GM10248 (cell line): ENCODE measurements at regions of chr3 and their contacts with region 1.

Region 1: DNA sequence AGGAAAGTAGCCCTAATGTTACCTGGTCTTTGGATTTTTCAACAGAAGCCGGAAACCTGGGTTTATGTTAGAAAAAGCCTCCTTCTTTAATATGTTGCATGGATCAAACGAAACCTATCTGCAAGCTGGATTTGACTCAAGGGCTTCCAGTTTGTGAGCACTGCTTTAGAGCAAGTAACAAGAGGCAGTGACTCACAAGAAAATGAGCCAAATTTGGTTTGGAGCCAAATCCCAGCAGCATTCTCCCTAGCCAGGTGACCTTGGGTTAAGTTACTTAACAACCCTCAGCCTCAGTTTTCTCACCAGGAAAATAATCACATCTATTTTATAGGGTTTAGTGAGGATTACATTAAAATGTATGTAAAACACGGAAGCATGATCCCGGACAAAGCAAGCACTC is 215.2 kb upstream of the PRICKLE2 start:
- DNase-seq: no peak
- CTCF ChIP-seq: no peak

Region 2: GRCh38 chr3:64426551-64426950 is 13.9 kb before region 1 on chr3:
- CTCF ChIA-PET with region 1: interaction called, 11 read pairs
- POLR2A ChIA-PET with region 1: no interaction called
- DNase-seq: no peak
- CTCF ChIP-seq: no peak

Region 3: GRCh38 chr3:64454179-64454578 is 13.7 kb after region 1 on chr3:
- CTCF ChIA-PET with region 1: interaction called, 15 read pairs
- POLR2A ChIA-PET with region 1: no interaction called
- DNase-seq: no peak
- CTCF ChIP-seq: no peak

Region 4: GRCh38 chr3:64508140-64508539 is 67.6 kb after region 1 on chr3:
- CTCF ChIA-PET with region 1: no interaction called
- POLR2A ChIA-PET with region 1: no interaction called
- DNase-seq: no peak
- CTCF ChIP-seq: no peak

Region 5: DNA sequence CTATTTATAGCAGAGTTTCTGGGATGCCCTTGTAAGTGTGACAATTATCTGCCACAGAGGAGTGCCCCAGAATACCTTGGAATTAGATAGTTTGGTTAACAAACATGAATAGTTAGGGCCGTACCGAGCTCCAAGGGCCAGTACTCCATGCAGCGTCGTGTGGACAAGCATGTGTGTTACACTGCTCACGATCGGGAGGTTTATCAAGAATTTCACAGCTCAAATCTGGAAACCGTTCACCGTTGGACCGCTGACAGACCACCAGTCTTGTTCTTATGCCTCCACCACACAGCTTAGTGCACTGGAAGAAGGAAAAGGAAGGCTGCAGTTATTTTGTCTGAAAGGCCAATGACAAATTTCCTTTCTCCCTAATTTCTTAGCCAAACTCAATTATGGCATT is 153.6 kb after region 1 on chr3:
- CTCF ChIA-PET with region 1: no interaction called
- POLR2A ChIA-PET with region 1: no interaction called
- DNase-seq: no peak
- CTCF ChIP-seq: no peak